Left ventricle myocardium inferior (tissue), 1 donor: ENCODE measurements at regions of chr16 and their contacts with region 1.

Region 1: GRCh38 chr16:66977341-66978113 is 10.9 kb upstream of the CES4A start:
- DNase-seq: peak; percentile 87
- H3K4me3 ChIP-seq: no peak overlapping the region
- H3K27ac ChIP-seq: no peak overlapping the region
- H3K4me1 ChIP-seq: no peaks in the 10 kb centered on the region
- H3K27me3 ChIP-seq: peaks cover 8% of the 10 kb centered on the region
- CTCF ChIP-seq: peak; percentile 98

Region 2: DNA sequence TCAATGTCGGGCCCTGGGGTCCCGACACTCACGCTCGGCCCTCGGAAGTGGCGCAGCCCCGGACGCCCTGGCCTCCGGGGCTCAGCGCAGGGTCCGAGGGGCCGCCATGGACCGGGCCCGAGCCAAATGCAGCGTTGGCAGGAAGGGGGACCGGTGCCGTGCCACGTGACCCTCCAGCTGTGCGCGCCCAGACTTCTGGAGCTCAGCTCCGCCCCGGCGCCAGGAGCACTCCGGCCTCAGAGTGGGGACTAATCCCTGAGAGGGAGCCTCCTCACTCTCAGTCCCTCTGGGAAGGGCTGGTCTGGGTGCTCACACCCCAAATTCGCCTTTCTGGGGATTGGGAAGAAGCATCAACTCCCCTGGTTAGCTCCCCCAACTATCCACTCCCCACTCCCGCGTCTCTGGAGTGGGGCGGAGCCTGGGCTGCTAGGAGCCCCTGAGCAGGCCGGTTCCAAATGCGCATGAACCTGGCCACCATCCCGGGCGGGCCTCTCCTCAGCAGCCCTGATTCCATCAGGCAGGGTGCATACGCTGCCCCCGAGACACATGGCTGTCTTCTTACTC is 173.4 kb after region 1 on chr16 and contains the start of gene B3GNT9:
- intact Hi-C with region 1: loop called (anchors 5 kb)
- DNase-seq: peak; percentile 82
- H3K4me3 ChIP-seq: peak within 1 kb of the TSS; percentile 75
- H3K27ac ChIP-seq: peak within 1 kb of the TSS; percentile 82
- H3K4me1 ChIP-seq: peaks cover 34% of the 10 kb centered on the region
- H3K27me3 ChIP-seq: peaks cover 12% of the 10 kb centered on the region
- CTCF ChIP-seq: no peak
- total RNA-seq, gene B3GNT9: 9.8 TPM